ENCODE measurements at regions of chr4 and their contacts with region 1.

Region 1: DNA sequence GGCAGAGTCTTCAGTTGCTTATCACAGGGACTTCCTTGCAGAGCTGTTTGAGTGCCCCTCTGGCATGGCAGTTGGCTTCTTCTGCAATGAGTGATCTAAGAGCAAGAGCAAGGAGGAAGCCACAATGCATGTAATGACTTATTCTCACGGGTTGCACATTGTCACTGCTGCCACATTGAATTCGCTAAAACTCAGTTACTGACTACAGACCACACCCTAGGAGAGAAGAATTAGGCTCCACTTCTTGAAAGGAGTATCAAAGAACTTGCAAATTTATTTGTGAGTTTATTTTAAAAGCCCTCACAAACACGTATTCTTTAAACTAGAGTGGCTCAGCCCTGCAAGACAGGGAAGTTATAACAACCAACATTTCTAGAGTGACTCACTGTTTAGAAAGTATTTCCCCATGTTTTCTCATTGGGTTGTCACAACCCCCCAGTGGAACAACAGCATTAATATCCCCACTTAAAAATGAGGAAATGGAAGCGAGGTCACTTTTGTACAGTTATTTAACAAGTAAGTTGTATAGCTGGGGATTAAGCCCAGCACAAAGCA is 32.4 kb upstream of the RBPJ start:
- DNase-seq: peak; percentile 20 to 90
- H3K4me3 ChIP-seq: peak overlapping the region; percentile 11; the same call in 1 of the 2 replicates
- H3K27ac ChIP-seq: peak overlapping the region; percentile 77
- H3K4me1 ChIP-seq: peaks cover 34% of the 10 kb centered on the region
- H3K27me3 ChIP-seq: no peaks in the 10 kb centered on the region
- CTCF ChIP-seq: no peak

Region 2: DNA sequence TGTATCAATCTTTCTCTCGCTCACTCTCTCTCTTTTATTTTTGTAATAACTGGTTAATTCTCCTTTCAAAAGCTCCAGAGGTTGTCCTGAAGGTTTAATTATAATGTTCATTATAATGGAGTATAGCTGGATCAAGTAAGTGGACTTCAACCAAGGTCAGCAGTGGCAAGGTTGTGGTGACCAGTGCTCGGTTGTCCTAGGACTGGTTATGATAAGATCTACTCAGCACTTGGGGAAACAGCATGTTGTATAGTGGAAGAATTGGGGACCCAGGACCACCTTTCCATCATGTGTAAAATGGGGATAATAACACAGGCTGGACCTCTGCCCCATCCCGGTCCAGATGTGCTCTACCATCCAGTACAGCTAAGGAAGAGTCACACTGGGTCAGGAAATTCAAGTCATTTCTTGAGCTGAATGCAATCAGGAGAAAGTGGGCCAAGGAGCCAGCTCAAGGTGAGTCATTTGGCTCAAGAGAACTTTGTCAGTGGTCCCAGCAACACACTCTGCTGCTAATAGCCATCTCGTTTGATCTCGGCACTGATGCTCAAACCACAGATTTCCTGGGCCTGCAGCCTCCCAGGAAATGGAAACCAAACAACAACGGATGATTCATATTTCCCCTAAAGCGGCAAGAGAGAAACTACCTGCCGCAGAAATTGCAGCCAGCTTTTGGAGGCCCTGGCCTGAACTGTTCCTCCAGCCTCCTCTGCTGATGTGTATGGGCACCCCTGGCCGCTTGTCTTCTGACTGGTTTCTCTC is 91.2 kb before region 1 on chr4:
- CTCF ChIA-PET with region 1: no interaction called
- POLR2A ChIA-PET with region 1: no interaction called
- intact Hi-C with region 1: loop called (anchors 10 kb)
- DNase-seq: peak; percentile 79 to 96
- H3K4me3 ChIP-seq: no peak overlapping the region
- H3K27ac ChIP-seq: peak overlapping the region; percentile 82
- H3K4me1 ChIP-seq: peaks cover 23% of the 10 kb centered on the region
- H3K27me3 ChIP-seq: no peaks in the 10 kb centered on the region
- CTCF ChIP-seq: no peak